ENCODE measurements at regions of chr19 and their contacts with region 1.

Region 1: DNA sequence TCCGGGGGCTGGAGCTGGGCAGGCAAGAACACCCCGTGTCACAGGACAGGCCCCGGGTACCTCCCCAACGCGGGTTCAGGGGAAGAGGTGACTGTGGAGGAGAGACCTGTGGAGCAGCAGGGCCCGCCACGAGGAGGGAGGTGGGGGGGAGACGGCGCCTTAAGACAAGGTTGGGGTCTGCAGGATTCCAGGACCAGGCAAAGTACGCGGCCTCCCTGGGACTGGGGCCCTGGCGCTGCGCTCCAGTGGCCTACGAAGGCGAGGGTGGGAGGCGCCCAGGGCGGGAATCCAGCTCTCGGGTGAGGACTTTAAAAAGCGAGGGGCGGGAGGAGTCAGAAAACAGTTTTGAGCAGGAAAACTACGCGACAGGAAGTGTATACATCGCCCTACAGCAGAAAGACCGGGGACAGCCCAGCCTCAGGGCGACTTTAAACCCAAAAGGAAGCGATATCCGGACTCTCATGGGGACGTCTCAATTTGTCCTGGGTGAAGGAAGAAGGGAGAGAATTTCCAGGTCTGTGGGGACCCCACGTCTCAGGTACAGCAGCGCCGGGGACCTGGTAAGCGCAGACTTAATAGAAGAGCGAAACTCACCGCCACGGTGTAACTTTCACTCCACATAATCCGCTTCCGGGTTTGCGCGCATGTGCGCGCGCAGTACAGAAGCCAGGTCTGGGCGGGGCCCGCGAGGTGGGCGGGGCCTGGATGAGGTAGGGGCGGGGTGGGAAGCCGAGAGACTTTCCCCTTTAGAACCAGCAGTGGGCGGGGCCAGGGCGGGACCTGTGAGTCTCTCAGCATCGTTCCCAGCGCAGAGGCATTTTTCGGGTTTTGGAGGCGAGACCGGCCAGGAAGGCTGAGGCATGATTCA is at the start of gene ZNF83:
- DNase-seq: peak; percentile 98
- H3K4me3 ChIP-seq: peak within 1 kb of the TSS; percentile 63 to 73 (median 67)
- H3K27ac ChIP-seq: peak within 1 kb of the TSS; percentile 74 to 87 (median 84)
- H3K4me1 ChIP-seq: peaks cover 0 to 15% (median 14%) of the 10 kb centered on the region in 4 donors
- H3K27me3 ChIP-seq: no peaks in the 10 kb centered on the region
- CTCF ChIP-seq: no peak
- EP300 ChIP-seq: no peak
- POLR2A ChIP-seq: peak in 1 of 2 donors; percentile 44
- total RNA-seq, gene ZNF83: 49.2 to 96.7 (median 55.9) TPM

Region 2: GRCh38 chr19:52601025-52601973 is 36.7 kb before region 1 on chr19:
- intact Hi-C with region 1: loop called (anchors 2 kb)
- DNase-seq: peak; percentile 97
- H3K4me3 ChIP-seq: peak overlapping the region; percentile 48 to 66 (median 56)
- H3K27ac ChIP-seq: peak overlapping the region; percentile 70 to 87 (median 76)
- H3K4me1 ChIP-seq: peaks cover 0 to 17% (median 14%) of the 10 kb centered on the region in 4 donors
- H3K27me3 ChIP-seq: no peaks in the 10 kb centered on the region
- CTCF ChIP-seq: peak in 2 of 4 experiments; percentile 27 to 46
- EP300 ChIP-seq: no peak
- POLR2A ChIP-seq: peak in 1 of 2 donors; percentile 28

Region 3: GRCh38 chr19:52648336-52649016 is 10.5 kb after region 1 on chr19:
- intact Hi-C with region 1: no loop called
- DNase-seq: no peak
- H3K4me3 ChIP-seq: no peak overlapping the region
- H3K27ac ChIP-seq: peak overlapping the region in 1 of 4 donors; percentile 43
- H3K4me1 ChIP-seq: peaks cover 0 to 5% (median 0%) of the 10 kb centered on the region in 4 donors
- H3K27me3 ChIP-seq: no peaks in the 10 kb centered on the region
- CTCF ChIP-seq: no peak
- EP300 ChIP-seq: no peak
- POLR2A ChIP-seq: no peak

Region 4: DNA sequence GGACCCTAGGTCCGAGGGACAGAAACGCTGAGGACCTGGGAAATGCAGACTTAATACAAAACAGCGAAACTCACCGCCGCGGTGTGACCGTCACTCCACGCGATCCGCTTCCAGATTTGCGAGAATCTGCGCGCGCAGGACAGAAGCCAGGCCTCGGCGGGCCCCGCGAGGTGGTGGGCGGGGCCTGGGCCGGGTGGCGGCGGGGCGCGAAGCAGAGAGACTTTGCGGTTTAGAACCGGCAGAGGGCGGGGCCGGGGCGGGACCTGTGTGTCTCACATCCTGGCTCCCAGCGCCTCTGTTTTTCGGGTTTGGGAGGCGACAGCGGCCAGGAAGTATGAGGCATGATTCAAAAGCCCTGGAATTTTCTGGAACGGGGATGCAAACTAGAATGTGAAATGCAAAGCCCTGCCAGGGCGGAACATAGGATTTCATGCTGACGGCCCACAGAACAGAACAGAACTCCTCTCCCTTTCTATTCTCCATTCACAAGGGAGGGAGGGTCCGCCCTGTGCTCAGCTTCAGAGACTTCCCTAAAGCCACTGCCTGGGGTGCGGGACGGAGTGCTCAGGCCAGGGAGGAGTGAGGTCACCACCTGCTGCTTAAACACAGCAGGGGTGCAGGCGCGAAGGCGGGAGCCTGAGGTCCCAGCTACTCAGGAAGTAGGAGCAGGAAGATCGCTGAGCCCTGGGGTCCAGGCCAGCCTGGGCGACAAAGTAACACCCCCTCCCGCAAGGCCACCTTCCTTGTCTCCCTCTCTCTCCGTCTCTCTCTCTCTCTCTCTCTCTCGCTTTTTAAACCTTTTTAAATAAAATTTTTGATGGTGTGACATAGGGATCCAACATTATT is 52.6 kb after region 1 on chr19:
- intact Hi-C with region 1: loop called (anchors 2 kb)
- DNase-seq: peak; percentile 98
- H3K4me3 ChIP-seq: peak overlapping the region; percentile 59 to 71 (median 64)
- H3K27ac ChIP-seq: peak overlapping the region; percentile 85 to 91 (median 88)
- H3K4me1 ChIP-seq: peaks cover 0 to 22% (median 19%) of the 10 kb centered on the region in 4 donors
- H3K27me3 ChIP-seq: no peaks in the 10 kb centered on the region
- CTCF ChIP-seq: peak in 3 of 4 experiments; percentile 18 to 49 (median 33)
- EP300 ChIP-seq: no peak
- POLR2A ChIP-seq: peak; percentile 60 to 73